ENCODE measurements at regions of chr3 and their contacts with region 1.

Region 1: DNA sequence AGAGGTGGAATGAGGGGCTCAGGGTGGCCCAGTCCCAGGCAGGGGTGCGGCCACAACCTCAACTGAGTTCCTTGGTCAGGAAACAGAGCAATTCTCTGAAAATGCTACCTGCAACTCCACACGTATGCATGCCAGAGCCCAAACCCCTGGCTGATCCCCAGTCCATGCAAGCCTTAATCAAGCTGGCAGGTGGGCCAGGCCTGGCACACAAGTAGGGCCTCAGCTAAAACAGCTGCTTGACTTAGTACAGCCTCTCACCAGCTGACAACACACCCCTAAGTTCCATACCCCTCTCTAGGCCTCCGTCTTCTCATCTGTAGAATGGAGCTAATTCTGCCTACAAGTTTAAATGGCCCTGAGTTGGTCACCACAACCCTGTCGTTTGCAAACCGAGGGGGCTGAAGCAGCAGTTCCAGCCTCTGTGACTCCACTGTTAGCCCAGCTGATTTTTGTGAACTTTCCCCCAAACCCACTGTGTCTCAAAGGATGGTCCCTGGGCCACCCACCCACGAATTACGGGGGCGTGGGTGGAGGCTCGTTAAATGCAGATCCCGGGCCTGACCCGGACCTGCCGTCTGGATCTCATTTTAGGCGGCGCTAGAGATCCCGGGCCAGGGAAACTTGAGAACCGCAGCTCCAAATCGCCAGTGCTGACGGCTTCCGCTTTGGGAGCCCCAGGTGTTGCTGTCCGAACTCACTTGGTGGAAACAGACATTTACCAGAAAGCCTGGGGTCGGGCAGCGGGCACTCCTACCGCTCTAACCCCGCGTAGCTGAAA is 927 bp downstream of the CHDH start:
- DNase-seq: peak; percentile 47
- ATAC-seq: no peak
- H3K4me3 ChIP-seq: peak overlapping the region; percentile 73 to 92 (median 77)
- H3K27ac ChIP-seq: peak overlapping the region; percentile 98
- H3K4me1 ChIP-seq: peaks cover 66% of the 10 kb centered on the region
- H3K27me3 ChIP-seq: no peaks in the 10 kb centered on the region; a peak in 1 of 5 replicates
- CTCF ChIP-seq: peak; percentile 27; the same call in 1 of the 2 replicates
- EP300 ChIP-seq: no peak
- POLR2A ChIP-seq: peak in 1 of 2 experiments; percentile 2; a peak in 1 of 4 replicates
- RAD21 ChIP-seq: no peak

Region 2: GRCh38 chr3:53478166-53478830 is 367.0 kb before region 1 on chr3:
- CTCF ChIA-PET with region 1: no interaction called
- POLR2A ChIA-PET with region 1: interaction called, 11 read pairs
- in situ Hi-C with region 1: no loop called
- intact Hi-C with region 1: no loop called
- DNase-seq: peak; percentile 98
- ATAC-seq: peak; percentile 93
- H3K4me3 ChIP-seq: peak overlapping the region in 2 of 3 experiments; percentile 26 to 61; a peak in 3 of 6 replicates
- H3K27ac ChIP-seq: peak overlapping the region; percentile 95
- H3K4me1 ChIP-seq: peaks cover 48% of the 10 kb centered on the region
- H3K27me3 ChIP-seq: no peaks in the 10 kb centered on the region
- CTCF ChIP-seq: no peak
- EP300 ChIP-seq: peak in 1 of 2 experiments; percentile 97
- POLR2A ChIP-seq: peak in 1 of 2 experiments; percentile 41; a peak in 1 of 4 replicates
- RAD21 ChIP-seq: no peak

Region 3: DNA sequence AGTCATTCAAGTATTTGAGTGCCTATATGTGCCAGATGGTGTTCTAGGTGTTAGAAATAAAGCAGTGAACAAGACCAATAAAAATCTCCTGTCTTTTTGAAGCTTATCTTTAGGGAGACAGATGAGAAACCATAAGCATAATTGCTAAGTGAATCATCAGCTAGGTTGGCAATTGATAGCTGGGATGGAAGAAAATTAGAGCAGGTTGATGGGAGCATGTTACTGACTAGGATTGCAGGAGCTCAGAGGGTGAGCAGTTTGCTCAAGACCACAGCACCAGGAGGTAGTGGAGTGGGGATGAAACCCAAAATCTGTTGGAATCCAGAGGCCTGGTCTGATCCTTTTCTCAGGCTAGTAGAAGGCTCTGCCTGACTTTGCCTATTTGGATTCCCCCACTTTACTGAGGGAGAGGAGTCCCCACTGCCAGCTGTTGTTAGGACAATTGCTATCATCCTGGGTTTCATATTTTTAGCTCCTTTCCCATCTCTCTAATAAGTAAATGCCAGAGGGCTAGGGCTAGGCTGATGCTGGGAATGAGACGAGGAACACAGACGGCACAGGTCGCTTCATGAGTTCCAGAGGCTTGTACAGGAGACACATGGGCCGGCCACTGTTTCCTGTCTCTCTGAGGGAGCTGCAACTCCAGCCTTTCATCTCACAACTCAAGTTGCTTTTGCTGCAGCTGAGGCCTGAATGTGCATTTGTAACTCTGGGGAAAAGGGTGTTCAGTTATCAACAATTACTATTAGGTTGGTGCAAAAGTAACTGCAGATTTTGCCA is 248.0 kb before region 1 on chr3:
- CTCF ChIA-PET with region 1: no interaction called
- POLR2A ChIA-PET with region 1: no interaction called
- in situ Hi-C with region 1: no loop called
- intact Hi-C with region 1: no loop called
- DNase-seq: no peak
- ATAC-seq: no peak
- H3K4me3 ChIP-seq: no peak overlapping the region
- H3K27ac ChIP-seq: no peak overlapping the region
- H3K4me1 ChIP-seq: no peaks in the 10 kb centered on the region
- H3K27me3 ChIP-seq: no peaks in the 10 kb centered on the region
- CTCF ChIP-seq: no peak
- EP300 ChIP-seq: no peak
- POLR2A ChIP-seq: no peak
- RAD21 ChIP-seq: no peak

Region 4: DNA sequence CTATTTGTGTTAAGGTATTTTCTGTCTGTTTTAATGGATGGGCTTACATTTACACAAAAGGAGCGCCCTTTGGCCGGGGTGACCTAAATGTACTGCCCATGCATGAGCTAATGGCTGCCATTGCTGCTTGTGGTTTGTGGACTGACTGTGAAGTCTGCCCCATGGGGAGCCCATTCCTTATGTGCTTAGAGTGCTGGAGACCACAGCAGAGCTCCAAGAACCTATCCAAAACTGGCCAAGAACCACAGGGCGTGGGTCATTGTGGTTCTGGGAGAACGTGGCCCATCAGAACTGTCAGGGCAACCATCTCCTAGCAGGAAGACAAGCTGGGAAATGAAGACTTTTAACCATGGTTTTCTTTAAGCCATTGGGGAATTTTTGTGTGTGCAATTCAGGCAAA is 104.3 kb before region 1 on chr3:
- CTCF ChIA-PET with region 1: no interaction called
- POLR2A ChIA-PET with region 1: no interaction called
- in situ Hi-C with region 1: no loop called
- intact Hi-C with region 1: no loop called
- DNase-seq: no peak
- ATAC-seq: no peak
- H3K4me3 ChIP-seq: no peak overlapping the region
- H3K27ac ChIP-seq: no peak overlapping the region
- H3K4me1 ChIP-seq: no peaks in the 10 kb centered on the region
- H3K27me3 ChIP-seq: peaks cover 0 to 3% of the 10 kb centered on the region in 2 experiments; a peak in 2 of 5 replicates
- CTCF ChIP-seq: no peak
- EP300 ChIP-seq: no peak
- POLR2A ChIP-seq: no peak
- RAD21 ChIP-seq: no peak

Region 5: GRCh38 chr3:53804821-53805788 is 40.2 kb before region 1 on chr3:
- CTCF ChIA-PET with region 1: no interaction called
- POLR2A ChIA-PET with region 1: interaction called, 8 read pairs
- in situ Hi-C with region 1: no loop called
- intact Hi-C with region 1: loop called (anchors 5 kb)
- DNase-seq: no peak
- ATAC-seq: no peak
- H3K4me3 ChIP-seq: no peak overlapping the region
- H3K27ac ChIP-seq: no peak overlapping the region
- H3K4me1 ChIP-seq: peaks cover 18% of the 10 kb centered on the region
- H3K27me3 ChIP-seq: no peaks in the 10 kb centered on the region; a peak in 1 of 5 replicates
- CTCF ChIP-seq: no peak
- EP300 ChIP-seq: no peak
- POLR2A ChIP-seq: no peak
- RAD21 ChIP-seq: no peak

Region 6: DNA sequence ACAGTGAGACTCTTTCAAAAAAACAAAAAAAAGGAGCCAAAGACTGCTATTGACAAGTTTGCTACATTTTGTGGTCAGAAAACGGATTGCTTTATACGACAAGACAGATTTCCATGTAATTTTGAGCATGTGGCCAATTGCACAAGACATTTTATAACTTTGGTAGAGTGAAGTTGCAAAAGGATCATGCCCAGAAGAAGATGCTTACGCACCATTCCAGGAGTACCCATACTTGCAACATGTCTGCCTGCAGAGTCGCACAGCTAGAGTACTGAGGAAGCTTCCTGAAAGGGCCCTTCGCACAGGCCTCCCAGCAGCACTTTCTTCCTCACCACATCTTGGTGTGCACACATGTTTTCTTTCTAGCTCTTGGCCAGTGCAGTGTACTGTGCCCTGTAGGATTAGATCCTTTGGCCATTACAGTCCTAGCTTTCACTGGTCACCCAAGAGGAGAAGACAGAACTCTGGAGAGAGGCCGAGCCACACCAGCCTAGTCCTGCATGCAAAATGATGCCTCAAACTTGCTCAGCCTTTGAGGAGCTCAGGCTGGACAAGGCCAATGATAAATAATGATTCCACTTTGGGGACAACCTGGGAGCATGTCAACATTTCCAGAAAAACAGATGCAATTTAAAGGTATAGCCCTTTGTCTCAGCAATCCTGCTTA is 10.7 kb before region 1 on chr3:
- CTCF ChIA-PET with region 1: no interaction called
- POLR2A ChIA-PET with region 1: interaction called, 71 read pairs
- in situ Hi-C with region 1: no loop called
- intact Hi-C with region 1: no loop called
- DNase-seq: no peak
- ATAC-seq: no peak
- H3K4me3 ChIP-seq: no peak overlapping the region
- H3K27ac ChIP-seq: no peak overlapping the region
- H3K4me1 ChIP-seq: peaks cover 87% of the 10 kb centered on the region
- H3K27me3 ChIP-seq: no peaks in the 10 kb centered on the region
- CTCF ChIP-seq: no peak
- EP300 ChIP-seq: no peak
- POLR2A ChIP-seq: no peak
- RAD21 ChIP-seq: no peak

Region 7: DNA sequence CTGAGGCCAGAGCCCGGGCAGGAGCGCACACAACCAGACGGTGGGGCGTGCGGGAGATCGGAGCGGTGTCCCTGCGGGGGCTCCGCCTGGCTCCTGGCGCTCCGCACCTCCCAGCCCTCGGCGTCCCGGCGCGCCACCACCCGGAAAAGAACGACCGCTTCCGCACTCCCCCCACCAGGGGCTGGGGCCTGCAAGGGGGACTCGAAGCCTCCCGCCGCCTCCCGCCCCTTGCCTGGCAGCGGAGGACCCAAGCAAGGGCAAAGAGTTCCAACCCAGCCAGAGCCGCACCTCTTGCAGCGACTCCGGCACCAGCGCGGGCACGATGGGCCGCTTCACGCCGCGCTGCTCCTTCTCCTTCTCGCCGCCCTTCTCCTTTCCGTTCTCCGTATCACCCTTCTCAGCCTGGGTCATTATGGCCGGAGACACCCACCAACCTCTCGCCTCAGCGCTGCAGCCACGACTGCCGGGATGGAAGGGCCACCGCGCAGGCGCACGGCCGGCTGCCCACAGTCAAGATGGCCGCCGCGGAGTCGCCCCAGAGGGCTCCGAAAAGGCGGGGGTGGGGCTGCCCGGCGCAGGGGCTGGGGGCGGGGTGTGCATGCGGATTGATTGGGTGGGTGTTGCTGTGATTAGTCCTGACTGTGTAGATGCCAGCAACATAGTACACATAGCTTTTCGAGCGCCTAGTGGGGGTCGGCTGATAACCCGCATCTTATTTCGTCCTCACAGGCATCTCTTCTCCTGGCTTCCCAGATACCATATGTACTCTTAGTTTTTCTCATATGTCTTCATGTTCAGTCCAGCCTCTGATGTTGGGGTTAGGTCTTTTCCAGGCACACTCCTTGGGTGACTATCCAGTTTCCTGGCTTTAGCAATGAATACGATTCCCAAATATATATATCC is 36.6 kb after region 1 on chr3 and contains the start of gene ACTR8:
- CTCF ChIA-PET with region 1: no interaction called
- POLR2A ChIA-PET with region 1: interaction called, 37 read pairs
- in situ Hi-C with region 1: loop called (anchors 5 kb)
- intact Hi-C with region 1: loop called (anchors 2 kb)
- DNase-seq: peak; percentile 71
- ATAC-seq: peak; percentile 94
- H3K4me3 ChIP-seq: peak within 1 kb of the TSS; percentile 91 to 98 (median 97)
- H3K27ac ChIP-seq: peak within 1 kb of the TSS; percentile 93
- H3K4me1 ChIP-seq: peaks cover 17% of the 10 kb centered on the region
- H3K27me3 ChIP-seq: no peaks in the 10 kb centered on the region; a peak in 1 of 5 replicates
- CTCF ChIP-seq: peak; percentile 56
- EP300 ChIP-seq: no peak
- POLR2A ChIP-seq: peak; percentile 92 to 93
- RAD21 ChIP-seq: peak; percentile 54
- total RNA-seq, gene ACTR8: 29.0 and 38.5 TPM in 2 replicates

Region 8: GRCh38 chr3:54042259-54042823 is 197.0 kb after region 1 on chr3:
- CTCF ChIA-PET with region 1: no interaction called
- POLR2A ChIA-PET with region 1: no interaction called
- in situ Hi-C with region 1: no loop called
- intact Hi-C with region 1: no loop called
- DNase-seq: no peak
- ATAC-seq: no peak
- H3K4me3 ChIP-seq: no peak overlapping the region
- H3K27ac ChIP-seq: no peak overlapping the region
- H3K4me1 ChIP-seq: no peaks in the 10 kb centered on the region
- H3K27me3 ChIP-seq: peaks cover 1 to 9% of the 10 kb centered on the region in 2 experiments; a peak in 2 of 5 replicates
- CTCF ChIP-seq: no peak
- EP300 ChIP-seq: no peak
- POLR2A ChIP-seq: no peak
- RAD21 ChIP-seq: no peak

Measured in HepG2 (cell line).